CD4-positive, alpha-beta T cell (primary cell): ENCODE measurements at regions of chr5 and their contacts with region 1.

Region 1: GRCh38 chr5:53109443-53110127 is at the start of gene MOCS2:
- DNase-seq: peak; percentile 79 to 96 (median 88)
- ATAC-seq: peak; percentile 96
- H3K4me3 ChIP-seq: peak within 1 kb of the TSS; percentile 88
- H3K4me3 Mint-ChIP-seq: peak within 1 kb of the TSS; percentile 94
- H3K27ac ChIP-seq: peak within 1 kb of the TSS; percentile 64 to 77
- H3K27ac Mint-ChIP-seq: peak within 1 kb of the TSS; percentile 89
- H3K4me1 ChIP-seq: peaks cover 10% of the 10 kb centered on the region
- H3K4me1 Mint-ChIP-seq: peaks cover 58% of the 10 kb centered on the region
- H3K27me3 ChIP-seq: no peaks in the 10 kb centered on the region
- H3K27me3 Mint-ChIP-seq: no peaks in the 10 kb centered on the region
- CTCF ChIP-seq: no peak
- total RNA-seq, gene MOCS2: 19.5 to 20.4 TPM

Region 2: DNA sequence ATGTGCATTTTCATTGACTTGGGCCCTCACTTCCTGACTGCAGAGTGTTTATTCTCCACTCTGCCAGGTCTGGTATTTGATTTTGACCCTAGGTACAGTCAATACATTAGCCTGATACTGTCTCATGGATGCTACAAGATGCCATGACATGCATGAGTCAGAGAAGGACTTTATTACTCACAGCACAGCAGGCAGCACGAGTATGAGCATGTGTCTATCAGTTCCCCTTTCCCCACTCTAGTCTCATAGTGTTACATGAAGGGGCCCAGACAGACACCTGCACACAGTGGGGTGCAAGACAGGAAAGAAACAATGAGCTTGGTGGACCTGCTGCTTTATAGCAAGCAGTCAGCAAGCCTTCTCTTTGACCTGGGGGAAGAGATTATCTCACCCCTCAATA is 100.8 kb before region 1 on chr5:
- CTCF ChIA-PET with region 1: no interaction called
- POLR2A ChIA-PET with region 1: no interaction called
- intact Hi-C with region 1: no loop called
- DNase-seq: peak in 2 of 14 experiments; percentile 6 to 36
- ATAC-seq: no peak
- H3K4me3 ChIP-seq: no peak overlapping the region
- H3K4me3 Mint-ChIP-seq: no peak overlapping the region
- H3K27ac ChIP-seq: no peak overlapping the region
- H3K27ac Mint-ChIP-seq: no peak overlapping the region
- H3K4me1 ChIP-seq: no peaks in the 10 kb centered on the region
- H3K4me1 Mint-ChIP-seq: peaks cover 14% of the 10 kb centered on the region
- H3K27me3 ChIP-seq: no peaks in the 10 kb centered on the region
- H3K27me3 Mint-ChIP-seq: no peaks in the 10 kb centered on the region
- CTCF ChIP-seq: no peak

Region 3: GRCh38 chr5:53151713-53152458 is 42.3 kb after region 1 on chr5:
- CTCF ChIA-PET with region 1: no interaction called
- POLR2A ChIA-PET with region 1: no interaction called
- intact Hi-C with region 1: no loop called
- DNase-seq: no peak
- ATAC-seq: no peak
- H3K4me3 ChIP-seq: no peak overlapping the region
- H3K4me3 Mint-ChIP-seq: no peak overlapping the region
- H3K27ac ChIP-seq: no peak overlapping the region
- H3K27ac Mint-ChIP-seq: no peak overlapping the region
- H3K4me1 ChIP-seq: no peaks in the 10 kb centered on the region
- H3K4me1 Mint-ChIP-seq: no peaks in the 10 kb centered on the region
- H3K27me3 ChIP-seq: no peaks in the 10 kb centered on the region
- H3K27me3 Mint-ChIP-seq: peaks cover 16% of the 10 kb centered on the region
- CTCF ChIP-seq: no peak

Region 4: GRCh38 chr5:53560506-53561191 is 451.1 kb after region 1 on chr5 and contains the start of gene NDUFS4:
- CTCF ChIA-PET with region 1: no interaction called
- POLR2A ChIA-PET with region 1: no interaction called
- intact Hi-C with region 1: loop called in 1 of 2 experiments (anchors 5 kb)
- DNase-seq: peak; percentile 56 to 85 (median 72)
- ATAC-seq: peak; percentile 90
- H3K4me3 ChIP-seq: peak within 1 kb of the TSS; percentile 93
- H3K4me3 Mint-ChIP-seq: peak within 1 kb of the TSS; percentile 99
- H3K27ac ChIP-seq: peak within 1 kb of the TSS; percentile 51 to 58
- H3K27ac Mint-ChIP-seq: peak within 1 kb of the TSS; percentile 96
- H3K4me1 ChIP-seq: peaks cover 8% of the 10 kb centered on the region
- H3K4me1 Mint-ChIP-seq: peaks cover 56% of the 10 kb centered on the region
- H3K27me3 ChIP-seq: peaks cover 3 to 22% of the 10 kb centered on the region in 2 experiments
- H3K27me3 Mint-ChIP-seq: peaks cover 29% of the 10 kb centered on the region
- CTCF ChIP-seq: no peak
- total RNA-seq, gene NDUFS4: 25.0 to 25.1 TPM